Activated naive CD4-positive, alpha-beta T cell treated with anti-CD3 and anti-CD28 coated beads for 36 hours (primary cell): ENCODE measurements at regions of chr4 and their contacts with region 1.

Region 1: GRCh38 chr4:37452952-37453280 is 208.4 kb downstream of the NWD2 start:
- DNase-seq: peak; percentile 80
- H3K4me3 Mint-ChIP-seq: peak overlapping the region; percentile 69
- H3K27ac Mint-ChIP-seq: no peak overlapping the region
- H3K4me1 Mint-ChIP-seq: peaks cover 9% of the 10 kb centered on the region
- H3K27me3 Mint-ChIP-seq: peaks cover 43% of the 10 kb centered on the region

Region 2: DNA sequence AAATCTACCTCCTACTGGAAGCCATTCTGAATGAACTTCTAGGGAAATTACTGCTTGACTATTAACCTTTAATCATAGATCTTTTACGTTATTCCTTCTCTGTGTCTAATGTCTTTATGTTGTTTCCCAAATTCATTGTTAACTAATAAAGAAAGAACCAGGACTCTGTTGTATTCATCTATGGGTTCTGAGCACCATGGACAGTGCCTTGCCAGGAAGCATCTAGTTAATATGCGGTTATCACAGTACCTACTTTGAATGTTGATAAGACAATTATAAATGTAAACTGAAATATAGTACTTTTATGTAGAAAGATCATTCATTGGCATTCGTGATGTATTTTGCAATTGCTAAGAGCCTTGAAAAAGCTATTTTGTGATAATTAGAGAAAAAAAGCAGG is 184.6 kb before region 1 on chr4:
- CTCF ChIA-PET with region 1: no interaction called
- intact Hi-C with region 1: no loop called
- DNase-seq: no peak
- H3K4me3 Mint-ChIP-seq: no peak overlapping the region
- H3K27ac Mint-ChIP-seq: no peak overlapping the region
- H3K4me1 Mint-ChIP-seq: no peaks in the 10 kb centered on the region
- H3K27me3 Mint-ChIP-seq: peaks cover 9% of the 10 kb centered on the region

Region 3: GRCh38 chr4:37359261-37359660 is 93.7 kb before region 1 on chr4:
- CTCF ChIA-PET with region 1: no interaction called
- intact Hi-C with region 1: no loop called
- DNase-seq: no peak
- H3K4me3 Mint-ChIP-seq: no peak overlapping the region
- H3K27ac Mint-ChIP-seq: no peak overlapping the region
- H3K4me1 Mint-ChIP-seq: no peaks in the 10 kb centered on the region
- H3K27me3 Mint-ChIP-seq: peaks cover 22% of the 10 kb centered on the region

Region 4: GRCh38 chr4:37528166-37528885 is 75.4 kb after region 1 on chr4:
- CTCF ChIA-PET with region 1: no interaction called
- intact Hi-C with region 1: no loop called
- DNase-seq: no peak
- H3K4me3 Mint-ChIP-seq: no peak overlapping the region
- H3K27ac Mint-ChIP-seq: no peak overlapping the region
- H3K4me1 Mint-ChIP-seq: no peaks in the 10 kb centered on the region
- H3K27me3 Mint-ChIP-seq: no peaks in the 10 kb centered on the region

Region 5: GRCh38 chr4:37561803-37562207 is 108.9 kb after region 1 on chr4:
- CTCF ChIA-PET with region 1: interaction called, 63 read pairs
- intact Hi-C with region 1: loop called (anchors 1 kb)
- DNase-seq: no peak
- H3K4me3 Mint-ChIP-seq: no peak overlapping the region
- H3K27ac Mint-ChIP-seq: no peak overlapping the region
- H3K4me1 Mint-ChIP-seq: no peaks in the 10 kb centered on the region
- H3K27me3 Mint-ChIP-seq: no peaks in the 10 kb centered on the region

Region 6: GRCh38 chr4:37780444-37781150 is 327.7 kb after region 1 on chr4:
- CTCF ChIA-PET with region 1: no interaction called
- intact Hi-C with region 1: loop called (anchors 1 kb)
- DNase-seq: peak; percentile 75
- H3K4me3 Mint-ChIP-seq: no peak overlapping the region
- H3K27ac Mint-ChIP-seq: peak overlapping the region; percentile 66
- H3K4me1 Mint-ChIP-seq: peaks cover 21% of the 10 kb centered on the region
- H3K27me3 Mint-ChIP-seq: no peaks in the 10 kb centered on the region

Region 7: GRCh38 chr4:37802068-37802666 is 349.3 kb after region 1 on chr4:
- CTCF ChIA-PET with region 1: no interaction called
- intact Hi-C with region 1: loop called (anchors 2 kb)
- DNase-seq: peak; percentile 46
- H3K4me3 Mint-ChIP-seq: no peak overlapping the region
- H3K27ac Mint-ChIP-seq: no peak overlapping the region
- H3K4me1 Mint-ChIP-seq: no peaks in the 10 kb centered on the region
- H3K27me3 Mint-ChIP-seq: no peaks in the 10 kb centered on the region

Region 8: GRCh38 chr4:38034986-38035882 is 582.3 kb after region 1 on chr4:
- CTCF ChIA-PET with region 1: no interaction called
- intact Hi-C with region 1: loop called (anchors 2 kb)
- DNase-seq: peak; percentile 49
- H3K4me3 Mint-ChIP-seq: no peak overlapping the region
- H3K27ac Mint-ChIP-seq: no peak overlapping the region
- H3K4me1 Mint-ChIP-seq: no peaks in the 10 kb centered on the region
- H3K27me3 Mint-ChIP-seq: no peaks in the 10 kb centered on the region